ENCODE measurements at regions of chr6 and their contacts with region 1.

Region 1: DNA sequence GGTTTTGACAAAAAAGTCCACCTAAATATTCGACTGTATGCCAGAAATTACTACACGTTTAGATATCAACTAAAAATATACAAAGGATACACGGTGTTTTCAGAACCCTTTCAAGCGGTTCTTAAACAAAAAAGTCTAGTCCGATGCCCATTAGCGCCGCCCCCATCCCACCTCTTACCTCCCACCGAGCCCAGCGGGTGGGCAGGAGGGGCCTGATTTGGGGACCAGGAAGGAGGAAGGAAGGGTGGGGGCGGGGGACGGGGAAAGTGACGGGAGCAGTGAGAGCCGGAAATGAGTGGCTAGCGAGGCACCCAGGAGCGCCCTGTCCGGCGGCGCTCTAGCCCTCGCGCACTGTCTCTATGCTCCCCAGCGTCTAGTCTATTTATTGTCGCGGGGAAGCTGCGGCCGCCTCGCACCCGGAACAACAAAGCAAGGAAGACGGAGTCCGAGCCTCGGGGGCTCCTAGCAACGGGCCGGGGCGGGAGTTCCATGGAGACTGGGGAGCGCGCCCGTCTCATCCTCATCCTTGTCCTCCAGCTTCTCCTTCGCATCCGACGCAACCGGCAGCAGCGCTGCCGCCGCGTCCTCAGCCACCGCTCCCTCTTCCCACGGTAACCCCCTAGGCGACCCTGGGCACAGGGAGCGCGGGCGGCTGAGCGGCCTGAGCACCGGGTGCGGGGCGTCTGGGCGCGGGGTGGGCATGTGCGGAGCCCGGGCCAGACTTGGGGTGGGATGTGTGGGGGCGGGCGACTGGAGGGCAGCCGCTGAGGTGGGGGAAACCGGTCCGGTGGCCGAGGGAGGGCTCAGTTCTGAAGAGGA is at the start of gene TBPL1:
- DNase-seq: peak; percentile 96 to 98
- H3K4me3 ChIP-seq: peak within 1 kb of the TSS; percentile 76 to 100
- H3K27ac ChIP-seq: peak within 1 kb of the TSS; percentile 99
- H3K4me1 ChIP-seq: peaks cover 0 to 33% (median 10%) of the 10 kb centered on the region in 4 donors
- H3K27me3 ChIP-seq: no peaks in the 10 kb centered on the region
- CTCF ChIP-seq: no peak

Region 2: DNA sequence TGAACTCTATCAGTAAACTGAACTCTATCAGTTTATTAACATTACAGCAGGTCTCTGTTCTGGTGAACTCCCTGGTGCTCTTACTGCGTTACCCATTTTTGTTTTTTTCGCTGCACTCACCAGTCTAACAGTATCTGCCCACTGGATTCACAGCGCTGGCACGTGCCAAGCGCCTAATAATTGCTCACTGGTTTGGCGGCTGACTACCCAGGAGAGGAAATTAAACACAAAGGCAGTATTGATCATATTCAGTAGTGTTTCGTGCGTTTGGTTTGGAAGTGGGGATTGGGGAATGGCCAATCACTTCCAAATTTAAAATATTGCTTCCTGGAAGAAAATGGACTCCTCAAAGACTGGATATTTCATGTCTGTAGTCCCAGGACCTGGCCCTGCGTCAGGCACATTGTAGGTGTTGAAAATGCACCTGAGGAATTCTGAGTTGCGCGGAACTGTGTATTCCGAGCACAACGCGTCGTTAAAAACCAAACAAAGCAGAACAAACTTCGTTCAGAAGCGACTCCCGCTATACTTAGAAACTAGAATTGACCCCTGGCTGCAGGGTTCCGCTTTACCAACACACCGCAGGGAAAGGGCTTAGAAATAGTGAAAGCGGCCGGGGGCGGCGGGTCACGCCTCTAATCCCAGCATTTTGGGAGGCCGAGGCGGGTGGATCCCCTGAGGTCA is 1139.7 kb before region 1 on chr6:
- intact Hi-C with region 1: loop called (anchors 10 kb)
- DNase-seq: peak; percentile 45 to 70
- H3K4me3 ChIP-seq: peak overlapping the region; percentile 81 to 84
- H3K27ac ChIP-seq: peak overlapping the region; percentile 78 to 83
- H3K4me1 ChIP-seq: peaks cover 0 to 31% (median 20%) of the 10 kb centered on the region in 4 donors
- H3K27me3 ChIP-seq: no peaks in the 10 kb centered on the region
- CTCF ChIP-seq: no peak

Measured in tibial artery (tissue), 4 donors.